GM18951 (cell line): ENCODE measurements at regions of chr12 and their contacts with region 1.

Region 1: DNA sequence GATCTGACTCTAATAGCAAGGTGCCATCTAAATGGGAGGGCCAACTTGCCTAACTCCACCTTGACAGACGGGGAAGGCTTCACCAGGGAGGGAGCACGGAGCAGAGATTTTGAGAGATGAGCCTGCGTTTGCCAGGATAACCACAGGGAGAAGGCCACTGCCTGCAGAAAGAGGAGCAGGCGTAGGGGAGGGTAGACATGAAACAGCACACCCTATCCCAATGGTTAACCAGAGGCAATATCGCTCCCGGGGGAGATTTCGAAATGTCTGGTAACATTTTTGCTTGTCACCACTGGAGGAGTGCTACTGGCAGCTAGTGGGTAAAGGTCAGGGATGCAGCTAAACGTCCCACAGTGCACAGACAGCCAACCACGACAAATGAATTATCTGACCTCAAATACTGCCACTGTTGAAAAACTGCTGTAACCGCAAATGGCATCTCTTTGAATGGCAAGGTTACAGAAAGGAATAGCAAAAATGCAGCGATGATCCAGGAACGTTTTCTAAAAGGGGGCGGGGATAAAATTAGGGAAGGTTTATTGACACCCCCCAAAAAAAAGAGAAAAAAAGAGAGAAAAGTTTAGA is 126.0 kb upstream of the ATF7IP start:
- POLR2A ChIP-seq: no peak

Region 2: DNA sequence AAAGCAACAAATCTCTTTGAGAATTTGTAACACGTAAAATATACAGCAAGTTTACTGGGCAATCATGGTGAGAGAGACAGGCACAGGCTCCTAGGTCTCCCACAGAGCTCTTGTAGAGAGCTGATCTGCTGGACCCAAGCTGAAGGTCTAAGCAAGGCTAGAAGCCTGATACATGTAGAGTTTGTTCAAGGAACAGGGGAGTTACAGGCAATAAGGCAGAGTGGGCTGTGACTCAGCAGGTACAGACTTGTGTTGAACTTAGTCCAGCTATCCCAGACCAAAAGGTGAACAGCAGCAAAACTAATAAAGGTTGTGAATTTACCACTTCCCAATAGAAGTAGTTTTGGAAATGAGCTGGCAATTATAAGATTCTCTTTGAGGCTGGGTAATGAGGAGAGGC is 531.6 kb before region 1 on chr12:
- in situ Hi-C with region 1: no loop called
- POLR2A ChIP-seq: no peak

Region 3: GRCh38 chr12:14629832-14630710 is 390.6 kb after region 1 on chr12:
- in situ Hi-C with region 1: loop called (anchors 25 kb)
- POLR2A ChIP-seq: no peak